Endothelial cell of umbilical vein (primary cell): ENCODE measurements at regions of chrX and their contacts with region 1.

Region 1: DNA sequence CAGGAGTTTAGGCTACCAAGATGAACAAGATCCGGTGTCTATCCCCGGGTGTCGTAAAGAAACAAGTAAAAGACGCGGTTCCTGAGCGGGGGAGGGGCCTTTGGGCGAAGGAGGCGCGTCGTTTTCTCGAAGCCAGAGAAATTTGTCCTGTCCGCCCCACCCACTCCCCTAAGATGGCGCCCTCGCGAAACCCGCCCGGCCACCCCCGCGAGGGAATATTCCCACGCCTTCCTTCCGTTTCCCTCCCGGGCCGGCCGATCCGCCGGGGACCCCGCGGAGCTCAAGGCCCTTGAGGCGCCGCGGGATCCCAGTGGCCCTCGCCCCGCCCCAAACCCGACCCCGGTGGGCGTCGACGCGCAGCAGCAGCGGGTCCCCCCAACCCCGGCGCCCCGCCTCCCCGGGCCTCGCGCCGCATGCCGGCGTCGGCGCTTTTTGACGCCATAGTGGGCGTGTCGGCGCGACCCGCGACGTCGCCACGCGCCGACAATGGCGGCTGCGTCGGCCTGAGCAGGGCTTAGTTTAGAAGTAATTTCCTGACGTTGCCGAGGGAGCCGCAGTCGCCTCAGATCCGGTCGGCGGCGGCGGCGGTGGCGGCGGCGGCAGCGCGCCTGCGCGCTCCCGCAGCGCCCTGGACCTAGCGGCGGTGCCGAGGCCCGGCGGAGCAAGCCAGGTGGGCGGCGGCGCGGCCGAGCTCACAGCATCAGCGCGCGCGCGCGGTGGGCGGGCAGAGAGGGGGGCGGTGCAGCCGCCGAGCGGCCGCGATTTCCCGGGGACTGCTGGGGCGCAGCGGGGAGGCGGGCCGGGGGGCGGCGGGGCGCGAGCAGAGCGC is at the start of gene HTATSF1:
- DNase-seq: peak; percentile 84
- H3K4me3 ChIP-seq: peak within 1 kb of the TSS; percentile 46 to 89 (median 76)
- H3K27ac ChIP-seq: peak within 1 kb of the TSS; percentile 94
- H3K4me1 ChIP-seq: peaks cover 7% of the 10 kb centered on the region
- H3K27me3 ChIP-seq: no peaks in the 10 kb centered on the region
- CTCF ChIP-seq: no peak
- POLR2A ChIP-seq: no peak
- total RNA-seq, gene HTATSF1: 30.4 and 31.1 TPM in 2 replicates

Region 2: GRCh38 chrX:135973548-135974278 is 523.3 kb before region 1 on chrX and contains the start of gene MMGT1:
- CTCF ChIA-PET with region 1: no interaction called
- POLR2A ChIA-PET with region 1: no interaction called
- dilution Hi-C with region 1: no loop called
- intact Hi-C with region 1: loop called (anchors 2 kb)
- DNase-seq: peak; percentile 86
- H3K4me3 ChIP-seq: peak within 1 kb of the TSS; percentile 67 to 97 (median 87)
- H3K27ac ChIP-seq: peak within 1 kb of the TSS; percentile 95
- H3K4me1 ChIP-seq: peaks cover 10% of the 10 kb centered on the region
- H3K27me3 ChIP-seq: no peaks in the 10 kb centered on the region
- CTCF ChIP-seq: no peak
- POLR2A ChIP-seq: peak; percentile 52
- total RNA-seq, gene MMGT1: 18.8 and 19.9 TPM in 2 replicates

Region 3: GRCh38 chrX:136055651-136056221 is 441.2 kb before region 1 on chrX:
- CTCF ChIA-PET with region 1: no interaction called
- POLR2A ChIA-PET with region 1: no interaction called
- dilution Hi-C with region 1: no loop called
- intact Hi-C with region 1: loop called (anchors 1 kb)
- DNase-seq: peak; percentile 86
- H3K4me3 ChIP-seq: no peak overlapping the region
- H3K27ac ChIP-seq: peak overlapping the region; percentile 73
- H3K4me1 ChIP-seq: peaks cover 14% of the 10 kb centered on the region
- H3K27me3 ChIP-seq: no peaks in the 10 kb centered on the region
- CTCF ChIP-seq: no peak
- POLR2A ChIP-seq: no peak

Region 4: DNA sequence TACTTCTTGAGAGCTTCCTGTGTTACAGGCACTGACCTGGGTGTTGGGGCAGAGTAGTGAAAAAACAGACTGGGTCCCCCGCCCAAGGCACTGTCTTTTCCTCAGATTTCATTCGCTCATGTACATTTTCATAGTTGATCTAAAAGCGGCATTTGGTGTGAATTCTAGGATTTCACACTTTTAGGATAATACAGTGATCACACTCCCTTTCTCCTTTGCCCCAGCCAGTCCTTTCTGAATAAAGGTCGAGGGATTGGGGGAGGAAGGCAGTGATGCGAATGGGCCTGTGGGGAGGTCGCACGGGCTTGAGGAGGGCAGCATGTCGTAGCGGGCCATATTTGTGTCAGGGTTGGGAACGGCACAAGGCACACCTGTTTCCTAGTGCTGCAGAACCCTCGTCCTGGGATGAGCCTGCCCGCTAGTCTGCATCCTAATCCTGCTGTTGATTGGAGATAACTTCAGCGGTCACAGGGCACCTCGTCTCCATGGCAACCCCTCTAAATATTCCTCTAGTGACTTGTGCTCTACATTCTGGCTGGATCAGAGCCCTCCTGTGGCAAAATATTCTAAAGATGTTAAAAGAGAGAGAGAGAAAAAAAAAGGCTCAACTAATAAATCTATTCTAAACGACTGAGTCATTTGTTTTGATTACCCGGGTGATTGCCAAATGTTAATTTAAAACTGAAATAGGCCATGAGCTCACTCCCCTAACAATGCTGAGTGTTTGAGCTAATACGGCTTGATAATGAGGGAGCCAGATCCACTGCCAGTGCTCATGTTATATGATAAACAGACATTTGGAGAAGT is 327.9 kb before region 1 on chrX:
- CTCF ChIA-PET with region 1: no interaction called
- POLR2A ChIA-PET with region 1: no interaction called
- dilution Hi-C with region 1: no loop called
- intact Hi-C with region 1: loop called (anchors 1 kb)
- DNase-seq: peak; percentile 92
- H3K4me3 ChIP-seq: no peak overlapping the region
- H3K27ac ChIP-seq: peak overlapping the region; percentile 64
- H3K4me1 ChIP-seq: peaks cover 19% of the 10 kb centered on the region
- H3K27me3 ChIP-seq: no peaks in the 10 kb centered on the region
- CTCF ChIP-seq: no peak
- POLR2A ChIP-seq: no peak

Region 5: GRCh38 chrX:136468391-136469103 is 28.4 kb before region 1 on chrX:
- CTCF ChIA-PET with region 1: no interaction called
- POLR2A ChIA-PET with region 1: no interaction called
- dilution Hi-C with region 1: no loop called
- intact Hi-C with region 1: no loop called
- DNase-seq: no peak
- H3K4me3 ChIP-seq: no peak overlapping the region
- H3K27ac ChIP-seq: no peak overlapping the region
- H3K4me1 ChIP-seq: no peaks in the 10 kb centered on the region
- H3K27me3 ChIP-seq: no peaks in the 10 kb centered on the region
- CTCF ChIP-seq: no peak
- POLR2A ChIP-seq: no peak

Region 6: GRCh38 chrX:136635235-136635634 is 138.3 kb after region 1 on chrX:
- CTCF ChIA-PET with region 1: no interaction called
- POLR2A ChIA-PET with region 1: no interaction called
- dilution Hi-C with region 1: no loop called
- intact Hi-C with region 1: no loop called
- DNase-seq: no peak
- H3K4me3 ChIP-seq: no peak overlapping the region
- H3K27ac ChIP-seq: no peak overlapping the region
- H3K4me1 ChIP-seq: no peaks in the 10 kb centered on the region
- H3K27me3 ChIP-seq: no peaks in the 10 kb centered on the region
- CTCF ChIP-seq: no peak
- POLR2A ChIP-seq: no peak

Region 7: DNA sequence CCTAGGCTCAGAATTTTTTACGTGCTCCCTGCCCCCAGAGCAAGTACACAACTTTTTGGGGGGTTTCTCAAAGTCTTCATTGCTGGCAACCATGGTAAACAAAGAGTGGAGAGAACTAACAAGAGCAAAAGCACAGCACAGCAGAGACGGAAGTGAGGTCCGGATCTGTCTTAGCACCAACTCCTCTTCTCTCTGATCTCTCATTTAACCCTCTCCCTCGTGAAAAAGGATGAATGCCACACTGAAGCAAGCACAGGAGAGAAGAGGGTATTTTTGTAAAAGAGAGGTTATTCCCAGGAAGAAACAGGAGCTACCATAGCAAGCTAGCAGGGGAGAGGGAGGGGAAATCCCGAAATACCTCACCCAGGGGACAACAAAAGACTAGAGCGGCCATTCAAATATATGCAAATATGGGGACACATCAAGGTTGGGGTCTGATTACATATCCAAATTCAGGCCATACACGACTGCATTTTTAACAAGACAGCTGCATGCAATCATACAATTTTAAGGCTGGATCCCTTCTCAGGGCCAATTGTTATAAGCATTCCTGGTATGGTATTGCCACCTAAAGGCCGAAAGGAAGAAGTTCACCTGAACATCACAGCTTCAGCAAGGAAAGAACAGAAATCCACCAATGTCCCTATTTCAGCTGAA is 197.6 kb after region 1 on chrX:
- CTCF ChIA-PET with region 1: no interaction called
- POLR2A ChIA-PET with region 1: no interaction called
- dilution Hi-C with region 1: no loop called
- intact Hi-C with region 1: loop called (anchors 5 kb)
- DNase-seq: peak; percentile 19
- H3K4me3 ChIP-seq: no peak overlapping the region
- H3K27ac ChIP-seq: no peak overlapping the region
- H3K4me1 ChIP-seq: no peaks in the 10 kb centered on the region
- H3K27me3 ChIP-seq: no peaks in the 10 kb centered on the region
- CTCF ChIP-seq: peak; percentile 32 to 33
- POLR2A ChIP-seq: no peak

Region 8: DNA sequence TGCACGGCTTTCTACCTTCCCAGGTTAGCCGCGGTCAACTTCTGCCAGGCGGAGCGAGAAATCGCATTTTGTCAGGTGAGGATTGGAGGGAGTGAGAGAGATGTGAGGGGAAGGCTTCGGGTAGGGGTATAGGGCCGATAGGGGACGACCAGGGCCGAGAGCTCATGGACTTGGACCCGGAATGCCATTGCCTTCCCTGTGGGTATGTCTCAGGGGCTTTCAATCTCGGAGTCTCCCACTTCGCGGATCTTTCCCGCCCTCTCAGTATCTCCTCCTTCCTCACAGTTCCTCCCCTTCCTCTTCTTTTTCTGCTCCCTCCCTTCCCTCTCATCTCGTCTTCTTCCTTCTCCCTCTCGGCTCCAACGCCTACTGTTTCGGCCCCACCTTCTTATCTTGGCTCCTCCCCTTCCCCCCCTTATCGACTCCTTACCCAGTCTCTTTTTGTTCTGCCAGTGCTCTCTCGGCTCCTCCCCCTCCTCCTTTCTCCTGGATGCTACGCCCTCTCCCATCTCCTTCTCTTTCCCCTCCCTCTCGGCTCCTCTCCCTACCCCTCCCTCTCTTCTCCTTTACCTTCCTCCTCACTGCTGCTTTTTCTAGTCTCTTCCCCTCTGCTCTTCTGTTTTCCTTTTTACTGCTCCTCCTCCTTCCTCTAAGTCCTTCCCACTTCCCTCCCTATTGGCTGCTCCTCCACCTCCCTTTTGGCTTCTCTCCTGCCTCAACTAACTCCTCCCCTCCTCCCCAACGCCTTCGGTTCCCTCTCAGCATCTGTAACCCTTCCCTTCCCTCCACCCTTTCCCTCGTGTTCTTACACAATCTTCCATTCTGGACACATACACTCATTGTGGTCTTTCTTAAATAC is 413.0 kb after region 1 on chrX:
- CTCF ChIA-PET with region 1: no interaction called
- POLR2A ChIA-PET with region 1: no interaction called
- dilution Hi-C with region 1: no loop called
- intact Hi-C with region 1: loop called (anchors 1 kb)
- DNase-seq: peak; percentile 82
- H3K4me3 ChIP-seq: peak overlapping the region; percentile 46 to 86 (median 78)
- H3K27ac ChIP-seq: peak overlapping the region; percentile 32
- H3K4me1 ChIP-seq: peaks cover 6% of the 10 kb centered on the region
- H3K27me3 ChIP-seq: no peaks in the 10 kb centered on the region
- CTCF ChIP-seq: no peak
- POLR2A ChIP-seq: peak; percentile 57